ENCODE measurements at regions of chr2 and their contacts with region 1.

Region 1: DNA sequence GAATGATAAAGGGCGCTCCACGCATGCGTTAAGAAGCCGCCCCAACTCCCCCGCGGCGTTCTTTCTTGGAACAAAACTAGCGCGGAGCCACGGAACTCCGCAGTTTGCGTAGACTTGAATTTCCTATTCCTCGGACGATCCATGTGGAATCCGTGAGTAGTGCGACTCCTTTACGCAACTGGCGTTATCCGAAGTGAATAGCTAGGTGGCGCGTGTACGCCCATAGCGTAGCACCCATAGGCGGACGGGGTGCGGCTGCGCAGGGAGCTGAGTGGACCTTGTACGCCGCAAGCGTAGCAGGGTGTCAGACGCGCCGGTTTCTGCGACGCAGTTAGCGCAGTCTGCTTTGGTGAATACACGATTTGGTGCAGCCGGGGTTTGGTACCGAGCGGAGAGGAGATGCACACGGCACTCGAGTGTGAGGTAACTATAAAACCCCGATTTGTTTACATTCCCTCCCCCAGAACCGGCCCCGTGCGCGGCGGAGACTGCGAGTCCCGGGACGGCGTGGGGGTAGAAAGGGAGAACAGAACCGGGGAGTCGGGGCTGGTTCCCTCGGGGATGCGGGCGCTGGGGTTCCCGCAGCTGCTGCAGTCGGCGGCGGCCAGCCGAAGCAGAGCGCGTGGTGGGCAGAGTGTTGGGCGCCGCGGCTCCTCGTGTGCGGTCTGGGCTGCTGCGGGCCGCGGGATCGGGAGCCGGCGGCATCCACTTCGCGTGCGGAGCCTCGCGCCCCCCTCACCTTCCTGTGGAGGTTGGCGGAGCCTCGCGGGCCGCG is at the start of gene SLC39A10:
- DNase-seq: peak; percentile 98 to 99
- ATAC-seq: peak; percentile 99
- H3K4me3 ChIP-seq: peak within 1 kb of the TSS; percentile 88 to 97
- H3K27ac ChIP-seq: peak within 1 kb of the TSS; percentile 90 to 91
- H3K4me1 ChIP-seq: peaks cover 0 to 1% of the 10 kb centered on the region in 2 donors
- H3K27me3 ChIP-seq: no peaks in the 10 kb centered on the region
- total RNA-seq, gene SLC39A10: 24.2 to 28.4 TPM

Region 2: DNA sequence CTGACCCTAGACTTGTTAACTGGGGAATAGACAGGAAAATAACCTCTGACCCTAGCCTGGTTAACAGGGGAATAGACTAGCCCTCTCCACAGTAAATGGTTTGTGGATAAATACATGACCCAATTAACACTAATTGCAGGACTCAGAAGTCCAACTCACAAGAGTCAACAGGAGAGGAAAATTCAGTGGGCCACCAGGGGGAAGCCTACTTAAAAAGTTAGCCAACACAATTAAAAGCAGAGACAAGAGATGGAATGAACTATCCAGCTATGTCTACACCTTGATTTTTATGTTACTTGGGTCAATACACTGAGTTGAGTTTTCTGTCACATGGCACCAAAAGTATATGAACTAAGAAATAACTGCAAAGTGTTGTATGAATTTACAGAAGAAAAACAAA is 158.9 kb before region 1 on chr2:
- intact Hi-C with region 1: loop called (anchors 2 to 10 kb)
- DNase-seq: peak in 1 of 2 donors; percentile 57
- ATAC-seq: no peak
- H3K4me3 ChIP-seq: no peak overlapping the region
- H3K27ac ChIP-seq: no peak overlapping the region
- H3K4me1 ChIP-seq: peaks cover 0 to 2% of the 10 kb centered on the region in 2 donors
- H3K27me3 ChIP-seq: no peaks in the 10 kb centered on the region

Region 3: GRCh38 chr2:195533771-195534642 is 123.0 kb before region 1 on chr2:
- intact Hi-C with region 1: loop called (anchors 2 kb)
- DNase-seq: peak; percentile 91 to 92
- ATAC-seq: peak; percentile 93
- H3K4me3 ChIP-seq: peak overlapping the region in 1 of 2 donors; percentile 19
- H3K27ac ChIP-seq: peak overlapping the region; percentile 36 to 76
- H3K4me1 ChIP-seq: peaks cover 3 to 4% of the 10 kb centered on the region in 2 donors
- H3K27me3 ChIP-seq: no peaks in the 10 kb centered on the region

Region 4: DNA sequence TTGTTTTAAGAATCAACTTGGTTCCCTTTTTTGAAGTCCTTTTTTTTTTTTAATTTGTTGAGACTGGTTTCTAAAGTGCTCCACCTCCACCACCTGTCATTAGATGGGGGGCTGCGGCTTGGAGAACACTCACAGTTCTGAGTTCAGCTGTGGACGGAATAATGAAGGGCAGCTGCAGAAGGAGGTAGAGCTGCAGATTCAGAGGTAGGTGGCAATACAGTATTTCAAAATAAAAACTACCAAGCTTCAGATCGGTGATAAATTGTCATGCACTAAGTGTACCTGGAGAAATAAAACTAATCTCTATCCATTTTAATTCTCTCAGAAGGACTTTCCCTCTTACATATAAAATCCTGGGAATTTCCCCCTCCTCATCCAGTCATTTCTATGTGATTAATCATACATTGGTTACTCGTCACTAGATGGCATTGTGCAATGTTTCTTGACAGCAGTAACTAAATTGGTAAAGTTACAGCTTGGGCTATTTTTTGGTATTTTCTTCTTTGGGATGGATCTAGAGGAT is 81.1 kb before region 1 on chr2:
- intact Hi-C with region 1: loop called in 1 of 2 experiments (anchors 2 kb)
- DNase-seq: no peak
- ATAC-seq: no peak
- H3K4me3 ChIP-seq: no peak overlapping the region
- H3K27ac ChIP-seq: no peak overlapping the region
- H3K4me1 ChIP-seq: no peaks in the 10 kb centered on the region
- H3K27me3 ChIP-seq: no peaks in the 10 kb centered on the region

Region 5: GRCh38 chr2:195612611-195613495 is 44.2 kb before region 1 on chr2:
- intact Hi-C with region 1: loop called in 1 of 2 experiments (anchors 5 kb)
- DNase-seq: no peak
- ATAC-seq: no peak
- H3K4me3 ChIP-seq: no peak overlapping the region
- H3K27ac ChIP-seq: peak overlapping the region in 1 of 2 donors; percentile 67
- H3K4me1 ChIP-seq: peaks cover 0 to 3% of the 10 kb centered on the region in 2 donors
- H3K27me3 ChIP-seq: no peaks in the 10 kb centered on the region

Region 6: GRCh38 chr2:196068271-196069209 is 411.5 kb after region 1 on chr2 and contains the start of gene DNAH7:
- intact Hi-C with region 1: loop called in 1 of 2 experiments (anchors 5 kb)
- DNase-seq: peak; percentile 95 to 96
- ATAC-seq: peak; percentile 97
- H3K4me3 ChIP-seq: peak within 1 kb of the TSS; percentile 86 to 87
- H3K27ac ChIP-seq: peak within 1 kb of the TSS in 1 of 2 donors; percentile 53
- H3K4me1 ChIP-seq: no peaks in the 10 kb centered on the region
- H3K27me3 ChIP-seq: no peaks in the 10 kb centered on the region
- total RNA-seq, gene DNAH7: 0.71 to 1.8 TPM